Mammary epithelial cell (primary cell): ENCODE measurements at regions of chr19 and their contacts with region 1.

Region 1: DNA sequence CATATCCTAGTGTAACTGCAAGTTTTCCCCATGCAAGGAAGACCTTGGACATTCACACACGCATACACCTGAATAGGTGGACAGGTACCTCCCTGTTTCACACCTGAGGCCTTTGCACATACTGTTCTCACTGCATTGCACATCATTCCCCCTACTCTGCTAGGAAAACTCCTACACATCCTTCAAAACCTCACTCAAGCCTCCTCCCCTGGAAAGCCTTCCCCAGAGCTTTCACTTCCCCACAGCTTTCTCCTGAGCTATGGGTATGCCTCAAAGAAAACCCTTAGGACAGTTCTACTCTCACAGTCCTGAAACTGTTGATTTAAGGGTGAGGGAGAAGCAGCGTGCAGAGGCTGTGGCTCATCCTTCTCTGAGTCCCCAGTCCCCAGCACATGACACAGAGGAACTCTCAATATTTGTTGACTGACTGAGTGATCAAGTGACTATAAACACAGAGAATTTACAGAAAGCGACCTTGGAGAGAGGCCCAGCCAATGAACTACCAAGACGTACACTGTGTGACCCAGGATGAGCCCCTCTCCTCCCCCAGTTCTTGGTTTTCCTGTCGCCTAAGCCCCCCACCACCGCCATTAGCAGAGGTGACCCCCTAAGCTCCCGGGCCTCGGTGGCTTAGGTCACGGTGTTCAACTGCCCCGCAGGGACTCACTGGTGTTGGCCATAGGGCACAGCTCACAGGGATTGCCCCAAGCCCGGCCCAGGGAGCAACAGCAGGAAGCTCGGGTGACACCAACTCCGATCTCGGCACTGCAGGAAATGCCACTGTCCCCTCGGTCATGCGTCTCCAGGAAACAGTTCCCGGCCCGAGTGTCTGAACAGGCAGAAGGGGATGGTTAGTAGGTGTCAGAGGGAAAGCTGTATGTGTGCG is 40.6 kb downstream of the FBN3 start:
- DNase-seq: no peak
- H3K4me3 ChIP-seq: no peak overlapping the region
- H3K27ac ChIP-seq: no peak overlapping the region
- H3K4me1 ChIP-seq: no peaks in the 10 kb centered on the region
- H3K27me3 ChIP-seq: no peaks in the 10 kb centered on the region
- CTCF ChIP-seq: no peak

Region 2: GRCh38 chr19:8071912-8072311 is 36.9 kb before region 1 on chr19:
- CTCF ChIA-PET with region 1: no interaction called
- dilution Hi-C with region 1: loop called (anchors 5 kb)
- in situ Hi-C with region 1: no loop called
- intact Hi-C with region 1: no loop called
- DNase-seq: no peak
- H3K4me3 ChIP-seq: no peak overlapping the region
- H3K27ac ChIP-seq: no peak overlapping the region
- H3K4me1 ChIP-seq: no peaks in the 10 kb centered on the region
- H3K27me3 ChIP-seq: no peaks in the 10 kb centered on the region
- CTCF ChIP-seq: no peak

Region 3: GRCh38 chr19:8129060-8129459 is 20.3 kb after region 1 on chr19:
- CTCF ChIA-PET with region 1: no interaction called
- dilution Hi-C with region 1: no loop called
- in situ Hi-C with region 1: no loop called
- intact Hi-C with region 1: no loop called
- DNase-seq: no peak
- H3K4me3 ChIP-seq: no peak overlapping the region
- H3K27ac ChIP-seq: no peak overlapping the region
- H3K4me1 ChIP-seq: no peaks in the 10 kb centered on the region
- H3K27me3 ChIP-seq: peaks cover 7% of the 10 kb centered on the region
- CTCF ChIP-seq: no peak